Activated CD8-positive, alpha-beta memory T cell treated with anti-CD3 and anti-CD28 coated beads, Interleukin-2, amount 10 ng/mL, durations not matched to agents 7 days and 5 days (primary cell): ENCODE measurements at regions of chr14 and their contacts with region 1.

Region 1: GRCh38 chr14:101772817-101773216 is 11.3 kb downstream of the PPP2R5C start:
- DNase-seq: peak; percentile 39
- ATAC-seq: no peak
- H3K4me3 Mint-ChIP-seq: no peak overlapping the region
- H3K27ac Mint-ChIP-seq: no peak overlapping the region
- H3K4me1 Mint-ChIP-seq: peaks cover 11% of the 10 kb centered on the region
- H3K27me3 Mint-ChIP-seq: no peaks in the 10 kb centered on the region

Region 2: DNA sequence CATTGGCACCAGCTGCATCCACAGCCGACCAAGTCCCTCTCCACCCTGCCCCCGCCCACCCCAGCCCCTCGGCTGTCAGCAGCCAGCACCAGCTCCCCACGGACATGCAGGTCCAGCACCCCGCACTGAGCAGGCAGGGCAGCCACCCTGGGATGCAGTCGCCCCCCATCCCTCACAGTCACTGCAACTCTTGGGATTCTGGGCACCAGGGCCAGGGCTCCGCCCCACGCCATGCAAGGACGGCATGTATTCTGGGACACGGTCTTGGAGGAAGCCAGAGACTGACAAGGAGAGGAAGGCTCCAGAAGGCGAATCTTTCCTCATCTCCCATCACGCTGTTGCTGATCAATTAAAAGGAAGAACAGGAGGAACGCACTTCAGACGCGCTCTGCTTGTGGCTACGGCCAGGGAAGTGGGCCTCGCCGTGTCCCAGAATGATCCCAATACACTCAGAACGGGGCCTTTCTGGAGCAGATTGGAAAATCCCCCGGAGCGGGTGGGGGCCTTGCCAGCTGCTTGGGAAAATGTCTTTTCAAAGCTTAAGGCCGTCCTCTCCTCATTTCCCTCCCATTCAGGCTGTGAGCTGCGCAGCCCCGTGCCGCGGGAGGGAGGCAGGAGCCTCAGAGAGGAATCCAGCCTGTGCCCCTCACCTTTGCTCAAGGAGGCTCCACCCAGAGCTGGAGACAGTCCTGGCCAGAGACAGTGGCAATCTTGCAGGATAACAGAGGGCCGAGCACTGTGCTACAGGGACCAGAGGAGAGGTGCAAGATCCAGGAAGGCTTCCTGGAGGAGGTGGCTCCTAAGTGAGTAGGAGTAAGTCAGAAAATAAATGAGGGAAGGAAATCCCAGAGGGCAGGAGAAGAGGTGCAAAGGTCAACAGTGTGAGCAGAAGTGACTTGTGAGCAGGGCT is 265.6 kb before region 1 on chr14:
- CTCF ChIA-PET with region 1: no interaction called
- DNase-seq: no peak
- ATAC-seq: no peak
- H3K4me3 Mint-ChIP-seq: no peak overlapping the region
- H3K27ac Mint-ChIP-seq: no peak overlapping the region
- H3K4me1 Mint-ChIP-seq: no peaks in the 10 kb centered on the region
- H3K27me3 Mint-ChIP-seq: no peaks in the 10 kb centered on the region

Region 3: DNA sequence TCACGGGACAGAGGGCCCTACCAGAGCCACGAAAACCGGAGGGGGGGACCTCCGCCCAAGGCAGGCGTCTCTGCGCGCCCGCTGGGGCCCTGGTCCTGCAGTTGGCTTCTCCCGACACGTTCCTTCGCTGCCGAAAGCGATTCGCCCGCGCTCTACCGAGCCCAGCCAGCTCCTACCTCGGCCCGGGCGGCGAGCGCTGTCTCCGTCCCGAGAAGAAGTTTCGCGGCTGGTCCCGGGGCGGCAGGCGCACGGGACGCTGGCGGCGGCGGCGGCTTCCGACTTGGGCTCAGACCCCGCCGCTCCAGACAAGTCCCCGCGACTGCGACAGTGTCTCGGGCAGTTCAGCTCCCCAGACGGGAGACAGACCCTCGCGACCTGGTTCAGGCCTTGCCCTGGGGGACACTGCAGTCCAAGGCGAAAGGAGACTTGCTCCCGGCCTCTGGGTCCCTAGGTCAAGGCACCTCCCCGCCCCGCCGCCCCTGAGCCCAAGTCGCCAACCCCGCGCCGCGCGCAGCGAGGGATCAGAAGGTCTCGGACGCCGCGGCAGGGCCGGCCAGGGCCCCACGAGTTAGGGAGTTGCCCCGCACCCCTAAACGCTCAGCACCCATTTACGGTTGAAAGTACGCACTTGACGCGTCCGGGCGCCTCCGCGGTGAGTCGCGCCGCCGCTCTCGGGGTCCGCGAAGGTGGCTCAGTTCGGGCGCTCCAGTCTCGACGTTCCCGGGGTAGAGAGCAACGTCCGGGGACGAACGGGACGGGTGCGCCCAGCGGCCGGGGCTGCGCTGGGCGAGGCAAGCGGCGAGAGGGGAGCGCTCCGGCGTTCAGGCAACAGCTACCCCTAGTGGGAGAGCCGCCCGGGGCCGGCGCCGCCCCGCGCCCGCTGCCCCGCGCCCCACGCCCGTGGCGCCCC is 212.9 kb before region 1 on chr14:
- CTCF ChIA-PET with region 1: no interaction called
- DNase-seq: no peak
- ATAC-seq: no peak
- H3K4me3 Mint-ChIP-seq: no peak overlapping the region
- H3K27ac Mint-ChIP-seq: no peak overlapping the region
- H3K4me1 Mint-ChIP-seq: no peaks in the 10 kb centered on the region
- H3K27me3 Mint-ChIP-seq: peaks cover 50% of the 10 kb centered on the region

Region 4: GRCh38 chr14:101791919-101792572 is 19.2 kb after region 1 on chr14:
- CTCF ChIA-PET with region 1: interaction called, 21 read pairs
- DNase-seq: no peak
- ATAC-seq: peak; percentile 94
- H3K4me3 Mint-ChIP-seq: peak overlapping the region; percentile 45
- H3K27ac Mint-ChIP-seq: peak overlapping the region; percentile 60
- H3K4me1 Mint-ChIP-seq: peaks cover 20% of the 10 kb centered on the region
- H3K27me3 Mint-ChIP-seq: no peaks in the 10 kb centered on the region